ENCODE measurements at regions of chr14 and their contacts with region 1.

Region 1: GRCh38 chr14:71103662-71104484 is 196.6 kb downstream of the PCNX1 start:
- H3K4me3 Mint-ChIP-seq: no peak overlapping the region
- H3K27ac Mint-ChIP-seq: no peak overlapping the region
- H3K4me1 Mint-ChIP-seq: no peaks in the 10 kb centered on the region
- H3K27me3 Mint-ChIP-seq: no peaks in the 10 kb centered on the region

Region 2: GRCh38 chr14:71460091-71460490 is 356.2 kb after region 1 on chr14:
- intact Hi-C with region 1: no loop called
- H3K4me3 Mint-ChIP-seq: no peak overlapping the region
- H3K27ac Mint-ChIP-seq: no peak overlapping the region
- H3K4me1 Mint-ChIP-seq: peaks cover 9% of the 10 kb centered on the region
- H3K27me3 Mint-ChIP-seq: no peaks in the 10 kb centered on the region

Region 3: DNA sequence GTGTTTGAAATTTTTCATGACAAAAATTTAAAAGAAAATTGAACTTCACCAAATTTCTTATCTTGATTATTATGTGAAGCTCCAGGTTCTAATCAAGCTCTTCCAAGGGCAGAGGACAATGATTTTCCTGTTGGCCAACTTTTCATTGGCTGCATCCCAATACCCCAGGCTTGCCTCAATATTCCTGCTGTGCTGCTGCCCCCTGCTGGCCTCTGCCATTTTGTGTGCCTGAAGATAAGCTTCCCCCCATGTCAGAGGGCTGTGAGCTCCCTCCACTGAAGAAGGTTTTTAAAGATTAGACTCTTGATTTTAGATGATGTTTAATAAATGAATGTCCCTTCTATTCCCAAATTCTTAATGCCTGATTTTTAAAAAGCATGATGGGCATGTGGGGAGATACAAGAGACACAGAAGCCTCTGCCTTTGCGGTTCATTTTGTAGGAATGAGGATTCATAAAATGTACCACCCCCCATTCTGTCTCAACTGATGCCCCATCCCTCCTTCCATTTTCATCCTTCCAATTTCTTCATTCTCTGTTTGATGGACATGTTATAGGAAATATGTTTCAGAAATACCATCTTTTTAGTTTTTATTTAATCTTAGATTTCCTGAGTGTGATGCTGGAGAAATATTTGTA is 751.6 kb after region 1 on chr14:
- intact Hi-C with region 1: loop called (anchors 10 kb)
- H3K4me3 Mint-ChIP-seq: no peak overlapping the region
- H3K27ac Mint-ChIP-seq: no peak overlapping the region
- H3K4me1 Mint-ChIP-seq: peaks cover 8% of the 10 kb centered on the region
- H3K27me3 Mint-ChIP-seq: peaks cover 8% of the 10 kb centered on the region